Sigmoid colon (tissue), 7 donors: ENCODE measurements at regions of chr7 and their contacts with region 1.

Region 1: GRCh38 chr7:149771721-149772240 is 1.6 kb downstream of the ZNF467 start:
- DNase-seq: peak; percentile 96
- H3K4me3 ChIP-seq: peak overlapping the region; percentile 65 to 89 (median 78)
- H3K27ac ChIP-seq: peak overlapping the region; percentile 72 to 82 (median 80)
- H3K4me1 ChIP-seq: peaks cover 0 to 30% (median 14%) of the 10 kb centered on the region in 4 donors
- H3K27me3 ChIP-seq: no peaks in the 10 kb centered on the region
- CTCF ChIP-seq: no peak
- EP300 ChIP-seq: no peak
- POLR2A ChIP-seq: no peak

Region 2: GRCh38 chr7:149028346-149029109 is 743.3 kb before region 1 on chr7 and contains the start of gene PDIA4:
- intact Hi-C with region 1: loop called (anchors 5 kb)
- DNase-seq: peak; percentile 100
- H3K4me3 ChIP-seq: peak within 1 kb of the TSS; percentile 59 to 90 (median 82)
- H3K27ac ChIP-seq: peak within 1 kb of the TSS; percentile 92 to 96 (median 95)
- H3K4me1 ChIP-seq: peaks cover 0 to 28% (median 23%) of the 10 kb centered on the region in 4 donors
- H3K27me3 ChIP-seq: no peaks in the 10 kb centered on the region
- CTCF ChIP-seq: peak in 2 of 4 experiments; percentile 26 to 29
- EP300 ChIP-seq: no peak
- POLR2A ChIP-seq: peak; percentile 42 to 60
- total RNA-seq, gene PDIA4: 34.3 to 47.4 (median 39.7) TPM

Region 3: GRCh38 chr7:149714050-149714909 is 57.5 kb before region 1 on chr7:
- intact Hi-C with region 1: loop called (anchors 5 kb)
- DNase-seq: peak; percentile 94
- H3K4me3 ChIP-seq: peak overlapping the region; percentile 59 to 84 (median 75)
- H3K27ac ChIP-seq: peak overlapping the region; percentile 78 to 84 (median 82)
- H3K4me1 ChIP-seq: peaks cover 0 to 45% (median 28%) of the 10 kb centered on the region in 4 donors
- H3K27me3 ChIP-seq: no peaks in the 10 kb centered on the region
- CTCF ChIP-seq: no peak
- EP300 ChIP-seq: no peak
- POLR2A ChIP-seq: no peak

Region 4: DNA sequence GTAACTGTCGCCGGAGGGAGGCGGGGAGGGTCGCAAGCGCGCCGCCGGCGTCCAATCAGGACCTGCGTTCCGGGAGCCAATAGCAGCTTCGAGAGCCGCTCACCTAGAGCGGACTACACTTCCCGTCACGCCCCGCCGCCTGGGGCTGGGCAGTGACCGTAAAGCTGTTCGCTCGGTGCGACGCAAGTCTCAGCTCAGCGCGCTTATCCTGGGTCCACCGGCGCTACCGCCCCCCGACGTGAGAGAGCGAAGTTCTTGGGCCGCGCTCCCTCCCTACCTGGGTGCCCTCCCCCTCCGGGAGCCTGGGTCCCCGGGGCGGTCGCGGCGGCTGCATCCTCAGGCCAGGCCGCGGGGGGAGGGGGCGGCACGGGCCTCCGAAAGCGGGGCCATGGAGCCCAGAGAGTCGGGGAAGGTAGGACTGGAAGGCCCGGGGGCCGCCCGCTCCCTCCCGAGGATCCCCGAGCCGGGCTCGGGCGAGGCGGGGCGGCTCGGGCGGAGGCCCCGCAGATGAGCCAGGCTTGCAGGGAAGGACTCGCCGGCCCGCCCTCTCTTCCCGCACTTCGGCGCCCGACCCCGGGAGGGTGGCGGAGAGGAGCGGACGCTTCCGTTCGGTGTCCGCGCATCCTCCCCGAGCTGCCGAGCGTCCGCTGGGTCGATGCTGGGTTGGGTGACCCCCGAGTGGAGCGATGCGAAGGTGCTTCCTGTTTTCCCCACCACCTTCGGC is 66.6 kb after region 1 on chr7 and contains the start of gene ZNF862:
- intact Hi-C with region 1: loop called (anchors 1 kb)
- DNase-seq: peak; percentile 99
- H3K4me3 ChIP-seq: peak within 1 kb of the TSS; percentile 74 to 100 (median 96)
- H3K27ac ChIP-seq: peak within 1 kb of the TSS; percentile 89 to 98 (median 98)
- H3K4me1 ChIP-seq: peaks cover 0 to 15% (median 9%) of the 10 kb centered on the region in 4 donors
- H3K27me3 ChIP-seq: no peaks in the 10 kb centered on the region
- CTCF ChIP-seq: no peak
- EP300 ChIP-seq: no peak
- POLR2A ChIP-seq: peak; percentile 51 to 57
- total RNA-seq, gene ZNF862: 12.5 to 23.8 (median 15.9) TPM

Region 5: GRCh38 chr7:149873074-149873969 is 101.5 kb after region 1 on chr7 and contains the start of gene ATP6V0E2:
- intact Hi-C with region 1: loop called (anchors 5 kb)
- DNase-seq: peak; percentile 98
- H3K4me3 ChIP-seq: peak within 1 kb of the TSS; percentile 73 to 93 (median 82)
- H3K27ac ChIP-seq: peak within 1 kb of the TSS; percentile 94 to 99 (median 98)
- H3K4me1 ChIP-seq: peaks cover 0 to 24% (median 17%) of the 10 kb centered on the region in 4 donors
- H3K27me3 ChIP-seq: no peaks in the 10 kb centered on the region
- CTCF ChIP-seq: no peak
- EP300 ChIP-seq: no peak
- POLR2A ChIP-seq: peak in 1 of 2 donors; percentile 51
- total RNA-seq, gene ATP6V0E2: 16.6 to 41.7 (median 29.9) TPM

Region 6: DNA sequence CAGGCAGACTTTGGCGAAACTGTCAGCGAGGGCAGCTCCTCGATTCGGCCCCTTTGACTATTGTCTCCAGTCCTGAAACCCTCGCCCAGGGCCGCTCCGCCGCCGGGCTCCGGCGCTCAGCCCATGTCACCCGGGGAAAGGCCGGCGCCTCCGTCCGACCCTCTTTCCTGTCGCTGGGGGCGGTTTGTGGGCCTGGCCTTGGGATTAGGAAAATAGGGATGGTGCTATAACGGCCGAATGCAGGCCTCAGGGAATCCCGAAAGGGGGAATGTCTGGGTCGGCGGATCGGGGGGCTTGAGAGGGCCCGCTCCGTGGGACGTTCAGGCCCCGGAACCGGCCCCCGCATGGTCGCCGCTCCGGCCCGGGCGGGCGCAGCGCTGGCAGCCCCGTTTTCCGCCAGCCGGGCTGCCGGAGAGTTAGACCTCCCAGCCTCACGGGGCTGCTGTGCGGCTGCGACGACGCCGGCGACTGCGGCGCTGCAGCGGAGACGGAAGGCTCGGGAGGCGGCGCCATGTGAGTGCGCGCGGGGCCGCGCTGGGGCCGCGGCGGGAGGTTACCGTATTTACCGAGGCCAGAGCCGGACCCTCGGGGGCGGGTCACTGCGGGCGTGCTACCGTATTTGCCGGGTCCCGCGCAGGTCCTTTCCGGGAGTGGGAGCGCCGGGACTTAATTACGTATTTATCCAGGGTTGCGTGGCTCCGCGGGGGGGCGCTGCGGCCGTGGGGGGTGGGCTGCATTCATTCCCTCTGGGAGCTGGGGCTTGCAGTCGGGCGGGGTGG is 633.2 kb after region 1 on chr7:
- intact Hi-C with region 1: loop called (anchors 10 kb)
- DNase-seq: peak; percentile 96
- H3K4me3 ChIP-seq: peak overlapping the region; percentile 68 to 74 (median 74)
- H3K27ac ChIP-seq: peak overlapping the region; percentile 95 to 99 (median 96)
- H3K4me1 ChIP-seq: peaks cover 0 to 36% (median 32%) of the 10 kb centered on the region in 4 donors
- H3K27me3 ChIP-seq: no peaks in the 10 kb centered on the region
- CTCF ChIP-seq: peak in 1 of 4 experiments; percentile 35
- EP300 ChIP-seq: no peak
- POLR2A ChIP-seq: peak; percentile 51 to 65